ENCODE measurements at regions of chr6 and their contacts with region 1.

Region 1: GRCh38 chr6:30212865-30213666 is at the start of gene TRIM26:
- DNase-seq: peak; percentile 97
- H3K4me3 ChIP-seq: peak within 1 kb of the TSS; percentile 93
- H3K27ac ChIP-seq: peak within 1 kb of the TSS; percentile 90
- H3K4me1 ChIP-seq: peaks cover 70% of the 10 kb centered on the region
- CTCF ChIP-seq: no peak
- total RNA-seq, gene TRIM26: 53.2 and 55.0 TPM in 2 replicates

Region 2: GRCh38 chr6:30066577-30067459 is 146.2 kb before region 1 on chr6 and contains the start of gene PPP1R11:
- CTCF ChIA-PET with region 1: no interaction called
- POLR2A ChIA-PET with region 1: no interaction called
- intact Hi-C with region 1: loop called (anchors 2 kb)
- DNase-seq: peak; percentile 99
- H3K4me3 ChIP-seq: peak within 1 kb of the TSS; percentile 77
- H3K27ac ChIP-seq: peak within 1 kb of the TSS; percentile 83
- H3K4me1 ChIP-seq: peaks cover 35% of the 10 kb centered on the region
- CTCF ChIP-seq: no peak
- total RNA-seq, gene PPP1R11: 30.6 and 35.6 TPM in 2 replicates

Region 3: GRCh38 chr6:30259140-30260035 is 46.3 kb after region 1 on chr6:
- CTCF ChIA-PET with region 1: no interaction called
- POLR2A ChIA-PET with region 1: no interaction called
- intact Hi-C with region 1: loop called (anchors 2 kb)
- DNase-seq: peak; percentile 85
- H3K4me3 ChIP-seq: peak overlapping the region; percentile 92
- H3K27ac ChIP-seq: peak overlapping the region; percentile 12
- H3K4me1 ChIP-seq: peaks cover 16% of the 10 kb centered on the region
- CTCF ChIP-seq: peak; percentile 51

Region 4: GRCh38 chr6:30326526-30327260 is 113.6 kb after region 1 on chr6 and contains the start of gene TRIM39:
- CTCF ChIA-PET with region 1: no interaction called
- POLR2A ChIA-PET with region 1: no interaction called
- intact Hi-C with region 1: loop called (anchors 5 kb)
- DNase-seq: peak; percentile 88
- H3K4me3 ChIP-seq: peak within 1 kb of the TSS; percentile 84
- H3K27ac ChIP-seq: peak within 1 kb of the TSS; percentile 84
- H3K4me1 ChIP-seq: peaks cover 36% of the 10 kb centered on the region
- CTCF ChIP-seq: no peak
- total RNA-seq, gene TRIM39: 10.9 and 11.4 TPM in 2 replicates

Measured in OCI-LY7 (cell line).